A673 (cell line): ENCODE measurements at regions of chr15 and their contacts with region 1.

Region 1: GRCh38 chr15:38631126-38632075 is 66.8 kb upstream of the RASGRP1 start:
- DNase-seq: no peak
- H3K4me3 ChIP-seq: no peak overlapping the region
- H3K27ac ChIP-seq: no peak overlapping the region
- H3K4me1 ChIP-seq: no peaks in the 10 kb centered on the region
- H3K27me3 ChIP-seq: peaks cover 21% of the 10 kb centered on the region
- CTCF ChIP-seq: no peak

Region 2: GRCh38 chr15:38378161-38378560 is 253.2 kb before region 1 on chr15:
- CTCF ChIA-PET with region 1: no interaction called
- POLR2A ChIA-PET with region 1: no interaction called
- intact Hi-C with region 1: no loop called
- DNase-seq: peak; percentile 18
- H3K4me3 ChIP-seq: no peak overlapping the region
- H3K27ac ChIP-seq: no peak overlapping the region
- H3K4me1 ChIP-seq: no peaks in the 10 kb centered on the region
- H3K27me3 ChIP-seq: no peaks in the 10 kb centered on the region
- CTCF ChIP-seq: no peak

Region 3: GRCh38 chr15:38589502-38589901 is 41.9 kb before region 1 on chr15:
- CTCF ChIA-PET with region 1: no interaction called
- POLR2A ChIA-PET with region 1: interaction called, 21 read pairs
- intact Hi-C with region 1: no loop called
- DNase-seq: peak; percentile 33
- H3K4me3 ChIP-seq: no peak overlapping the region
- H3K27ac ChIP-seq: no peak overlapping the region
- H3K4me1 ChIP-seq: no peaks in the 10 kb centered on the region
- H3K27me3 ChIP-seq: peaks cover 19% of the 10 kb centered on the region
- CTCF ChIP-seq: no peak

Region 4: GRCh38 chr15:38905634-38906033 is 274.2 kb after region 1 on chr15:
- CTCF ChIA-PET with region 1: no interaction called
- POLR2A ChIA-PET with region 1: no interaction called
- intact Hi-C with region 1: no loop called
- DNase-seq: no peak
- H3K4me3 ChIP-seq: no peak overlapping the region
- H3K27ac ChIP-seq: no peak overlapping the region
- H3K4me1 ChIP-seq: no peaks in the 10 kb centered on the region
- H3K27me3 ChIP-seq: peaks cover 7% of the 10 kb centered on the region
- CTCF ChIP-seq: no peak